ENCODE measurements at regions of chr1 and their contacts with region 1.

Region 1: DNA sequence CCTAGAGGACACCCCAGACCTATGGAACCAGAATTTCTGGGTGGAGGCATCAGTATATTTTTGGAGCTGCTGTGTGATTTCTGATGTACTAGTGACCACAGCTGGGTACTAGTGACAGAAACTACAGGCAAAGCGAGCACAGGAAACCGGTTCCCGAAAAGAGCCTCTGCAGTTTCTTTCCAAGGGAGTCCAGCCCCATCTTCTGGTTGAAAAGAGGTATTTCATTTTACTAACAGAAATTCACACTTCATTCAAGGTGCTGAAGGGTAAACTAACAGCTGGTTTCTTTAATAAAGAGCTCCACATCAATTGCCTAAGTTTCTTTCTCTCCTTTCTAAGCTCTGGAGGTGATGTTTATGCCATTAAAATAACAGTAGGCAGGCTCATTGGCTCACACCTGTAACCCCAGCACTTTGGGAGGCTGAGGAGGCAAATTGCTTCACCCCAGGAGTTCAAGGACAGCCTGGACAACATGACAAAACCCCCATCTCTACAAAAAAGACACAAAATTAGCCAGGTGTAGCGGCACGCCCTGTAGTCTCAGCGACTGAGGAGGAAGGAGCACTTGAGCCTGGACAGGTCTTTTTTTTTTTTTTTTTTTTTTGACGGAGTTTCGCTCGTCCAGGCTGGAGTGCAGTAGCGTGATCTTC is 22.0 kb downstream of the THAP3 start:
- DNase-seq: peak in 2 of 6 donors; percentile 29 to 40
- ATAC-seq: peak; percentile 70 to 88 (median 86)
- H3K4me3 ChIP-seq: no peak overlapping the region
- H3K27ac ChIP-seq: no peak overlapping the region
- H3K4me1 ChIP-seq: no peaks in the 10 kb centered on the region
- H3K27me3 ChIP-seq: no peaks in the 10 kb centered on the region
- CTCF ChIP-seq: peak; percentile 14 to 48 (median 39)

Region 2: GRCh38 chr1:6489799-6490180 is 156.8 kb before region 1 on chr1:
- intact Hi-C with region 1: loop called in 2 of 3 experiments (anchors 5 to 10 kb)
- DNase-seq: peak; percentile 52 to 91 (median 79)
- ATAC-seq: peak; percentile 83 to 89 (median 84)
- H3K4me3 ChIP-seq: peak overlapping the region; percentile 48 to 83 (median 72)
- H3K27ac ChIP-seq: peak overlapping the region in 1 of 4 donors; percentile 81
- H3K4me1 ChIP-seq: no peaks in the 10 kb centered on the region
- H3K27me3 ChIP-seq: no peaks in the 10 kb centered on the region
- CTCF ChIP-seq: peak; percentile 96 to 97 (median 97)

Region 3: DNA sequence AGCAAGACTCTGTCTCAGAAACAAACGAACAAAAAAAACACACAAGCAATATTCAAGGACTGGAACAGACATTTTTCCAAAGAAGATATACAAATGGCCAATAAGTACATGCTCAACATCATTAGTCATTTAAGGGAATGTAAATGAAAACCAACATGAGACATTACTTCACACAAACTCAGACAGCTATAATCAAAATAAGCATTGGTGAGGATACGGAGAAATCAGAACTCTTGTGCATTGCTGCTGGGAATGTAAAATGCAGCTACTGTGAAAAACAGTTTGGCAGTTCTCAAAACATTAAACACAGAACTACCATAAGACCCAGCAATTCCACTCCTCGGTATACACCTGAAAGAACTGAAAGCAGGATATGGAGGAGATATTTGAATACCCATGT is 107.7 kb before region 1 on chr1:
- intact Hi-C with region 1: no loop called
- DNase-seq: no peak
- ATAC-seq: no peak
- H3K4me3 ChIP-seq: no peak overlapping the region
- H3K27ac ChIP-seq: no peak overlapping the region
- H3K4me1 ChIP-seq: no peaks in the 10 kb centered on the region
- H3K27me3 ChIP-seq: no peaks in the 10 kb centered on the region
- CTCF ChIP-seq: no peak

Region 4: DNA sequence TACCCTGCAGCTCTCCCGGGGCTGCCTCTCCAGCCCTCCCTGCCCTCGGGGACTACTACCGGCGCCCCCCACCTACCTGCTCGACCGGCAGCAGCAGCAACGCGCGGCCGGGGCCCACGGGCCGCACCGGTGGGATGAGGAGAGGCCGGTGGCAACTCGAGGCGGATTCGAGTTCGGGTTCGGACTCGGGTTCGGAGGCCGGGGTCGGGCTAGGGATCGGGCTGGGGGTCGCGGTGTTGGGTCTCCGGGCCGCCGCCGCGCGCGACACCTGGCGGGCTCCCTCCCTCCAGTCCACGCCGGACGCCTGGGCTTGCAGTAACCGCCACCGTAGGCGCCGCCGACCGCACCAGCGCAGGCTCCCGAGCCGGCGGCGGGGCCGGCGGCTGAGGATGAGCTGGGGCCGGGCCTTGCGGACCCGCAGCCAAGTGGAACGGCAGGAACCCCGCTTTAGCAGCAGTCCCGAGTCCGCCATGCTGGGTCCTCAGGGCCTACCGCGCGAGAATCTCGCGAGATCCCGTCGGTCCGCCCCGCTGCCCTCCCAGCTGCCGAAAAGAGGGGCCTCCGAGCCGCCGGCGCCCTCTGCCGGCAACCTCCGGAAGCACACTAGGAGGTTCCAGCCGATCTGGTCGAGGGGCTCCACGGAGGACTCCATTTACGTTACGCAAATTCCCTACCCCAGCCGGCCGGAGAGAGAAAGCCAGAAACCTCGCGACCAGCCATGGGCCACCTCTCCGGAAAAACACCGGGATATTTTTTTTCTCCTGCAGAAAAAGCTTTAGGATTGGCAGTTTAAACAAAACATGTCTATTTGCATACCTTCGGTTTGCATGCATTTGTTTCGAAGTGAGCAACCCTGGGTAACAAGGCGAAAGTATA is 92.4 kb before region 1 on chr1 and contains the start of gene NOL9:
- intact Hi-C with region 1: loop called in 1 of 3 experiments (anchors 10 kb)
- DNase-seq: peak; percentile 90 to 98 (median 94)
- ATAC-seq: peak; percentile 98 to 100 (median 100)
- H3K4me3 ChIP-seq: peak within 1 kb of the TSS; percentile 94 to 100 (median 100)
- H3K27ac ChIP-seq: peak within 1 kb of the TSS; percentile 37 to 60 (median 52)
- H3K4me1 ChIP-seq: peaks cover 0 to 17% (median 11%) of the 10 kb centered on the region in 3 donors
- H3K27me3 ChIP-seq: no peaks in the 10 kb centered on the region
- CTCF ChIP-seq: peak; percentile 89 to 98 (median 97)
- total RNA-seq, gene NOL9: 10.3 to 15.1 (median 12.6) TPM